GM12878 (cell line): ENCODE measurements at regions of chr11 and their contacts with region 1.

Region 1: GRCh38 chr11:45655347-45655756 is 10.1 kb downstream of the CHST1 start:
- DNase-seq: no peak
- ATAC-seq: peak; percentile 85
- H3K4me3 ChIP-seq: no peak overlapping the region
- H3K27ac ChIP-seq: no peak overlapping the region
- H3K4me1 ChIP-seq: no peaks in the 10 kb centered on the region; the same call in 1 of the 2 replicates
- H3K27me3 ChIP-seq: peaks cover 3 to 10% of the 10 kb centered on the region in 2 experiments; a peak in 1 of 4 replicates
- CTCF ChIP-seq: peak; percentile 80 to 95 (median 92)
- EP300 ChIP-seq: no peak
- POLR2A ChIP-seq: no peak
- RAD21 ChIP-seq: peak; percentile 65

Region 2: DNA sequence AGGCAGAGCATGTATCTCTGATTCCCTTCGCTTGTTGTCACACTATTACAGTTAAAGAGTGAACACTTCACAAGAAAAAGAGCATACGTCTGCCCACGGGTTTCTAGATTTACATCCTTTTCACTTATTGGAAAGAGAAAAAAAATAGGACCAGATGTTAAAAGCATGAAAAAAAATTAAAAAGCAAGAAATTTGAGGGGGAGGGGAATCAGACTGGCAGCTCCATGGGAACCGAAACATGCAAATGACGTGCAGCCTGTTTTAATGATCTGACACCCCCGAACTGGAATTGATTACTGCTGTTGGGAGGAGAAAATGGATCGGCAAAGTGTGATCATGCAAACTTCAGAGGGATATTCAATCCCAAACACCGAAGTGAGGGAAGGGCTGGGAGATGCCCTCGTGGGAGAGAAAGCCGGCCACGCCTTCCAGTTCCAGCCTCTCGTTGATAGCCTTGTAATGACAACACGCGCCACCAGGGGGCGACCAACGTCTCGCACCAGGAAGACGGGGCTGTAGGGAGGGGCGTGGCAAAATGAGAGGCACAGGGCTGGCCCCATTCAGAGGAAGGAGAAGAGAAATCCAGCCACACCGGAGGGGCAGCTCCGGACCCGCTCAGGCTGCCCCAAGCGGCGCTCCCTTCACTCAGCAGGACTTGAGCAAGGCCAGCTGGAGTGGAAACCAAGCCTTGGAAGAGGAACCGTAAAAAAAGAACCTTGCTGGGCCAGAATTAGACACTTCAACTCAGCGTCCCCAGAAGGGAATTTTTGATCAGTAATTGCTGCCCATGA is 315.4 kb before region 1 on chr11:
- CTCF ChIA-PET with region 1: interaction called, 3 read pairs
- POLR2A ChIA-PET with region 1: no interaction called
- RAD21 ChIA-PET with region 1: interaction called, 3 read pairs
- SMC1A ChIA-PET with region 1: interaction called, 5 read pairs
- in situ Hi-C with region 1: no loop called
- intact Hi-C with region 1: loop called (anchors 1 kb)
- DNase-seq: peak; percentile 58
- ATAC-seq: peak; percentile 99
- H3K4me3 ChIP-seq: peak overlapping the region; percentile 50; the same call in 1 of the 2 replicates
- H3K27ac ChIP-seq: no peak overlapping the region; the same call in 1 of the 2 replicates
- H3K4me1 ChIP-seq: peaks cover 10% of the 10 kb centered on the region; the same call in 1 of the 2 replicates
- H3K27me3 ChIP-seq: peaks cover 0 to 4% of the 10 kb centered on the region in 2 experiments; a peak in 1 of 4 replicates
- CTCF ChIP-seq: peak; percentile 92 to 97 (median 93); a peak in 5 of 6 replicates
- EP300 ChIP-seq: no peak
- POLR2A ChIP-seq: no peak
- RAD21 ChIP-seq: peak; percentile 53

Region 3: GRCh38 chr11:45371251-45372115 is 283.9 kb before region 1 on chr11:
- CTCF ChIA-PET with region 1: interaction called, 28 read pairs
- POLR2A ChIA-PET with region 1: no interaction called
- RAD21 ChIA-PET with region 1: interaction called, 15 read pairs
- SMC1A ChIA-PET with region 1: interaction called, 7 read pairs
- in situ Hi-C with region 1: loop called (anchors 5 kb)
- intact Hi-C with region 1: loop called (anchors 1 kb)
- DNase-seq: no peak
- ATAC-seq: peak; percentile 89
- H3K4me3 ChIP-seq: no peak overlapping the region
- H3K27ac ChIP-seq: no peak overlapping the region
- H3K4me1 ChIP-seq: no peaks in the 10 kb centered on the region
- H3K27me3 ChIP-seq: peaks cover 0 to 6% of the 10 kb centered on the region in 2 experiments; a peak in 2 of 4 replicates
- CTCF ChIP-seq: peak; percentile 81 to 90 (median 86)
- EP300 ChIP-seq: no peak
- POLR2A ChIP-seq: no peak
- RAD21 ChIP-seq: peak; percentile 70

Region 4: DNA sequence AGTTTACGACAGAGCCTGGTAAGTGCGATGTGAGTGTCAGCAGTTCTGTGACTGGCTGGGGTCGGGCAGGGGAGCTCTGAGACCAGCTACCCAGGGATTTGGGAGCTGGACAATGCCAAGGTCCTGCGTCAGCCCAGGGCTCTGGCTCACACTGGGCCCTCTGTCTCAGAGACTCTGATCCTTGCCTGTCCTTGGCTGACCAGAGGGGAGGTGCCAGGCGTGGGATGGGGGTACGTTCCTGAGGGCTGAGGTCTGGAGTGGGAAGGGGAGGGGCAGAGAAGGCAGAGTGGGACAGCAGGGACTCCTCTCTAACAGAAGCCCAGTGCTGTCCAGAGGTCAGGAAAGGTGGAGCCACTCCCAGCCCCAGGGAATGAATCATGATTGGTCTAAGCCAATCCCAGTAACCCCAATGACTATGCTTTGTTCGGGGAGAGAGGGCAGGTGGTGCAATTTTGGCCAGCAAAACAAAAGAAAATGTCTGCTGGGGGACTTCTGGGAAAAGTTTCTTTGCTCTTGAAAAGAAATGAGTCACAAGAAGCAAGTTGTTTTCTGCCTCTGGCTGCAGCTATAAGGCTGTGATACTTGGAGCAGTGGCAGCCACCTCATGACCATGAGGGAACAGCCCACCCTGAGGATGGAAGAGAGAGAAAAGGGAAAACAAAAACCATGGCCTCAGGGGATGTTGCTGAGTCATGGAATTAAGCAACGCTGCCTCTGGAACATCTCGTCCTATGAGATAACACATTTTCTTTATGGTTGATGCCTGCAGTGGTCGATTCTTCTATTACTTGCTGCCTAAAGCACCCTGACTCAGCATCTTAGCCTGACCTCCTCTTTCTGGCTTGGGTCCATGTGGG is 98.3 kb before region 1 on chr11:
- CTCF ChIA-PET with region 1: no interaction called
- POLR2A ChIA-PET with region 1: no interaction called
- RAD21 ChIA-PET with region 1: no interaction called
- SMC1A ChIA-PET with region 1: no interaction called
- in situ Hi-C with region 1: no loop called
- intact Hi-C with region 1: no loop called
- DNase-seq: no peak
- ATAC-seq: no peak
- H3K4me3 ChIP-seq: no peak overlapping the region
- H3K27ac ChIP-seq: no peak overlapping the region
- H3K4me1 ChIP-seq: no peaks in the 10 kb centered on the region
- H3K27me3 ChIP-seq: peaks cover 0 to 2% of the 10 kb centered on the region in 2 experiments; a peak in 2 of 4 replicates
- CTCF ChIP-seq: no peak
- EP300 ChIP-seq: no peak
- POLR2A ChIP-seq: no peak
- RAD21 ChIP-seq: no peak